Endothelial cell of umbilical vein (primary cell): ENCODE measurements at regions of chr18 and their contacts with region 1.

Region 1: DNA sequence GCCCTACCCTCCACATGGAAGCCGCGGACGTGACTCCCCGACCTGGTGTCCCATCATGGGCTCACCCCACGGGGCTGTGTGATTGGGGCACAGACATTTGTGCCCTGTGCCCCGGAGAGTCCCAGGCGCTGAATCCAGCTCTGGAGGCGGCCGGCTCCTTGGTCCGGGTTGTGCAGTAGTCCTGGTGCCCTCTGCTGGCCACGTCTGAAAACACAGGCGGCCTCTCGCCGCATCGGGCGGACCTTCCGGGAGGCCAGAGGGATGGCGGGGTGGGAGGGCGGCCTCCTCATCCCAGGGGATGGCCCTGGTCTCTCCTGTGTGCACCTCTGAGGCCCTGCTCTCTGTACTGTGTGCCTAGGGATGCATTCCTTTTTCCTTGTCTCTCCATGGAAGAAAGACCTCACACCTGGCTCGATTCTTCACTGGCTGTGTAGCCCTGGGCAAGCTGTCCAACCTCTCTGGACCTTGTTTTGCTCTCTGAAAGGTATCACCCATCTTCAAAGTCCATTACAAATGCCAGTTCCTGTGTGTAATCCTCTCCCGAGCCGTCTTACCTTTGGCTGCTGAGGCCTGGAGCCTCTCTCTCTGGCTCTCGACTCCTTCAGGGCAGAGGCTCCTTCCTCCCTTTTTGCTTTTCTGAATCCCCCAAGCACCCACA is 27.6 kb downstream of the CELF4 start:
- DNase-seq: peak; percentile 44
- H3K4me3 ChIP-seq: no peak overlapping the region
- H3K27ac ChIP-seq: no peak overlapping the region
- H3K4me1 ChIP-seq: no peaks in the 10 kb centered on the region
- H3K27me3 ChIP-seq: peaks cover 7 to 8% of the 10 kb centered on the region in 2 experiments
- CTCF ChIP-seq: peak; percentile 68 to 93
- POLR2A ChIP-seq: no peak

Region 2: GRCh38 chr18:37341473-37342086 is 196.4 kb before region 1 on chr18:
- CTCF ChIA-PET with region 1: interaction called, 8 read pairs
- POLR2A ChIA-PET with region 1: no interaction called
- dilution Hi-C with region 1: no loop called
- intact Hi-C with region 1: loop called (anchors 1 kb)
- DNase-seq: no peak
- H3K4me3 ChIP-seq: no peak overlapping the region
- H3K27ac ChIP-seq: no peak overlapping the region
- H3K4me1 ChIP-seq: no peaks in the 10 kb centered on the region
- H3K27me3 ChIP-seq: peaks cover 0 to 2% of the 10 kb centered on the region in 2 experiments
- CTCF ChIP-seq: no peak
- POLR2A ChIP-seq: no peak

Region 3: DNA sequence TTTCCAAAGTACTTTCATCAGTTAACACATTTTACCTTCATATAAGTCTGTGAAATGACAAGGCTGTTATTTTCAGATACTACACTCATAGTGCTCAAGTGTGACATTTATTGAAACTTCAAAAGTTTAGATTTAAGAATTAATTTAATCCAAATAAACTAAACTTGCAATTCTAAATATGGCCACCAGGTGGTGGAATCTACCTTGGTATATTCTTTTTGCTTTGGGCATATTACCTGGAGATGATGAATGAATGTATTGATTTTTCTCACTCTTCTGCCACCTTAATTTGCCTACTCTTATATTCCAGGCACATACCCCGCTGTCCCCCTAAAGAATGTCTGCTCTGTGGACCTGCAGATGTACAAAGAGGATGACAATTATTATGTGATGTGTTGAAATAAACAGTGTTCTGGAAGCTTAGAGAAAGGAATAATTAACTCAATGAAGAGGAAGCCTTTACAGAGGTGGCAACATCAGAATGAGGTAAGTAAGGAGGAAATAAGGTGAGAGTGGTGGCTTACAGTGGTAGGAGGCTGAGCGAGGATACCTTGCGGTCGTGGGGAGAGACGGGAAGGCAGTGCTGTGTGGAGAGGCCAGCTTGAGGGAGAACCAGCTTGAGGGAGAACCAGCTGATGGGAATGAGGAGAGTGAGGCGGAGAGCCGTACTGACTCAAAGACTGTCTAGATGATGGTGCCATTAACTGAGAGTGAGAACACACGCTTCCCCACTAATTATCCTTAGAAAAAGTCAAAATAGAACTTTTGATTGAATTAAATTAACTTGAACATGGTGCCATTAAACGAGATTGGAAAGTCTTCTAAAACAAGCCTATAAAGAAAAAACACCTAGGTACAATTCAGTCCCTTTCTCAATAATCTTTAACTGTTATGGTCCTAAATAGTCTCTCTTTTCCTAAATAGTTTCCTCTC is 151.9 kb before region 1 on chr18:
- CTCF ChIA-PET with region 1: interaction called, 37 read pairs
- POLR2A ChIA-PET with region 1: no interaction called
- dilution Hi-C with region 1: no loop called
- intact Hi-C with region 1: loop called (anchors 1 kb)
- DNase-seq: peak; percentile 44
- H3K4me3 ChIP-seq: no peak overlapping the region
- H3K27ac ChIP-seq: no peak overlapping the region
- H3K4me1 ChIP-seq: no peaks in the 10 kb centered on the region
- H3K27me3 ChIP-seq: no peaks in the 10 kb centered on the region
- CTCF ChIP-seq: peak; percentile 23 to 52
- POLR2A ChIP-seq: no peak

Region 4: DNA sequence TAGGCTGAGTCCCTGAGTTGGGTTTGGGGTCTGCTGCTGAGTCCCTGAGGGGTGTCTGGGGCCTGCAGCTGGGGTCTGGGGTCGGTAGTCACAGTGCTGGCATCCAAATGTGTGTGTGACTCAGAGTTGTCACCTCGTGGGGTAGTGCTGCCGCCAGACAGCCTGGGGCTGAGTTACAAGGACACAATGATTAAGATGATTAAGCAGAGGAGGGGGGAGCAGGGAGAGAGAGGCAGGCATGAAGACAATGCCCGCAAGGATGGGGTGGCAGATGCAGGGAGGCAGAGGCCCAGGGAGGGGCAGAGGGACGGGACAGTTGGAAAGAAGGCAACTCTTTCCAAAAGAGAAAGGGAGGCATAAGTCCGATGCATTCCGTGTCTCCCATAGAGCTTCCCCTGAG is 92.6 kb before region 1 on chr18:
- CTCF ChIA-PET with region 1: interaction called, 8 read pairs
- POLR2A ChIA-PET with region 1: no interaction called
- dilution Hi-C with region 1: no loop called
- intact Hi-C with region 1: loop called (anchors 2 kb)
- DNase-seq: no peak
- H3K4me3 ChIP-seq: no peak overlapping the region
- H3K27ac ChIP-seq: no peak overlapping the region
- H3K4me1 ChIP-seq: no peaks in the 10 kb centered on the region
- H3K27me3 ChIP-seq: no peaks in the 10 kb centered on the region
- CTCF ChIP-seq: no peak
- POLR2A ChIP-seq: no peak